CD8-positive, alpha-beta T cell (primary cell): ENCODE measurements at regions of chr12 and their contacts with region 1.

Region 1: GRCh38 chr12:6195665-6196535 is 4.3 kb upstream of the CD9 start:
- DNase-seq: peak; percentile 53 to 87 (median 75)
- ATAC-seq: peak; percentile 80
- H3K4me3 ChIP-seq: no peak overlapping the region
- H3K4me3 Mint-ChIP-seq: no peak overlapping the region
- H3K27ac ChIP-seq: no peak overlapping the region
- H3K27ac Mint-ChIP-seq: no peak overlapping the region
- H3K4me1 ChIP-seq: peaks cover 8% of the 10 kb centered on the region
- H3K4me1 Mint-ChIP-seq: peaks cover 19% of the 10 kb centered on the region
- H3K27me3 ChIP-seq: peaks cover 0 to 6% of the 10 kb centered on the region in 2 experiments
- H3K27me3 Mint-ChIP-seq: no peaks in the 10 kb centered on the region
- CTCF ChIP-seq: peak; percentile 69

Region 2: GRCh38 chr12:6062757-6063735 is 132.9 kb before region 1 on chr12:
- CTCF ChIA-PET with region 1: interaction called, 7 read pairs
- POLR2A ChIA-PET with region 1: no interaction called
- intact Hi-C with region 1: loop called (anchors 2 kb)
- DNase-seq: peak; percentile 39 to 81 (median 64)
- ATAC-seq: peak; percentile 99
- H3K4me3 ChIP-seq: no peak overlapping the region
- H3K4me3 Mint-ChIP-seq: no peak overlapping the region
- H3K27ac ChIP-seq: no peak overlapping the region
- H3K27ac Mint-ChIP-seq: no peak overlapping the region
- H3K4me1 ChIP-seq: no peaks in the 10 kb centered on the region
- H3K4me1 Mint-ChIP-seq: peaks cover 3% of the 10 kb centered on the region
- H3K27me3 ChIP-seq: no peaks in the 10 kb centered on the region
- H3K27me3 Mint-ChIP-seq: peaks cover 3% of the 10 kb centered on the region
- CTCF ChIP-seq: peak; percentile 84

Region 3: GRCh38 chr12:6140651-6141447 is 55.1 kb before region 1 on chr12:
- CTCF ChIA-PET with region 1: interaction called, 17 read pairs
- POLR2A ChIA-PET with region 1: interaction called, 3 read pairs
- intact Hi-C with region 1: loop called in 1 of 2 experiments (anchors 5 kb)
- DNase-seq: peak in 7 of 9 experiments; percentile 26 to 70 (median 34)
- ATAC-seq: peak; percentile 67
- H3K4me3 ChIP-seq: peak overlapping the region in 1 of 2 experiments; percentile 18
- H3K4me3 Mint-ChIP-seq: peak overlapping the region; percentile 64
- H3K27ac ChIP-seq: peak overlapping the region; percentile 54 to 61
- H3K27ac Mint-ChIP-seq: peak overlapping the region; percentile 97
- H3K4me1 ChIP-seq: peaks cover 60% of the 10 kb centered on the region
- H3K4me1 Mint-ChIP-seq: peaks cover 49% of the 10 kb centered on the region
- H3K27me3 ChIP-seq: no peaks in the 10 kb centered on the region
- H3K27me3 Mint-ChIP-seq: no peaks in the 10 kb centered on the region
- CTCF ChIP-seq: no peak

Region 4: GRCh38 chr12:6182116-6182898 is 13.6 kb before region 1 on chr12:
- CTCF ChIA-PET with region 1: interaction called, 19 read pairs
- POLR2A ChIA-PET with region 1: no interaction called
- intact Hi-C with region 1: no loop called
- DNase-seq: no peak
- ATAC-seq: no peak
- H3K4me3 ChIP-seq: no peak overlapping the region
- H3K4me3 Mint-ChIP-seq: no peak overlapping the region
- H3K27ac ChIP-seq: no peak overlapping the region
- H3K27ac Mint-ChIP-seq: no peak overlapping the region
- H3K4me1 ChIP-seq: no peaks in the 10 kb centered on the region
- H3K4me1 Mint-ChIP-seq: no peaks in the 10 kb centered on the region
- H3K27me3 ChIP-seq: no peaks in the 10 kb centered on the region
- H3K27me3 Mint-ChIP-seq: peaks cover 4% of the 10 kb centered on the region
- CTCF ChIP-seq: no peak

Region 5: GRCh38 chr12:6267139-6267721 is 71.3 kb after region 1 on chr12:
- CTCF ChIA-PET with region 1: interaction called, 185 read pairs
- POLR2A ChIA-PET with region 1: no interaction called
- intact Hi-C with region 1: no loop called
- DNase-seq: peak in 2 of 9 experiments; percentile 24 to 34
- ATAC-seq: peak; percentile 36
- H3K4me3 ChIP-seq: no peak overlapping the region
- H3K4me3 Mint-ChIP-seq: no peak overlapping the region
- H3K27ac ChIP-seq: no peak overlapping the region
- H3K27ac Mint-ChIP-seq: no peak overlapping the region
- H3K4me1 ChIP-seq: no peaks in the 10 kb centered on the region
- H3K4me1 Mint-ChIP-seq: no peaks in the 10 kb centered on the region
- H3K27me3 ChIP-seq: no peaks in the 10 kb centered on the region
- H3K27me3 Mint-ChIP-seq: peaks cover 2% of the 10 kb centered on the region
- CTCF ChIP-seq: no peak

Region 6: DNA sequence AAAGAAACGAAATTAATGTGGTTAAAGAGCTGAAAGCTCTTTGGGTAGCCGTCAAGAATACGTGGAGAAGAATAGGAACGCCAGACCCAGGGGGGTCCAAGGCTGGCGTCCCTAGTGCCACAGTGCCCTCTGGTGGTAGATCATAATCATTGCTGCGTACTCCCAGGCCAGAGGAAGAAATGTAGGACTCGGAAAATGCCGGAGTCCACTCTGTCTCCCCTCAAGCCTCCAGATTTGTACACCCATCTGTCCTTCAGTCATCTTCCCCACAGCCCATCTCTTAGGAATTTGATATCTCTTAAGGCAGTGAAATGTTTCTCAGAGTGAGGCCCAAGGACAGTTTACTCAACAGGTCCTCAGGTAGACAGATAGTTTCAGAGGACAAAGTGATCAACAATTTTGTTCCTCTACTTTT is 89.2 kb after region 1 on chr12:
- CTCF ChIA-PET with region 1: interaction called, 185 read pairs
- POLR2A ChIA-PET with region 1: no interaction called
- intact Hi-C with region 1: loop called (anchors 1 kb)
- DNase-seq: peak in 8 of 9 experiments; percentile 43 to 80 (median 66)
- ATAC-seq: peak; percentile 91
- H3K4me3 ChIP-seq: no peak overlapping the region
- H3K4me3 Mint-ChIP-seq: no peak overlapping the region
- H3K27ac ChIP-seq: no peak overlapping the region
- H3K27ac Mint-ChIP-seq: no peak overlapping the region
- H3K4me1 ChIP-seq: no peaks in the 10 kb centered on the region
- H3K4me1 Mint-ChIP-seq: peaks cover 4% of the 10 kb centered on the region
- H3K27me3 ChIP-seq: peaks cover 0 to 4% of the 10 kb centered on the region in 2 experiments
- H3K27me3 Mint-ChIP-seq: peaks cover 17% of the 10 kb centered on the region
- CTCF ChIP-seq: peak; percentile 83